Panc1 (cell line): ENCODE measurements at regions of chrX and their contacts with region 1.

Region 1: GRCh38 chrX:98654565-98654964 is 1755.5 kb downstream of the PCDH19 start:
- DNase-seq: no peak
- ATAC-seq: no peak
- H3K4me3 ChIP-seq: no peak overlapping the region
- H3K27ac ChIP-seq: no peak overlapping the region
- H3K4me1 ChIP-seq: no peaks in the 10 kb centered on the region
- H3K27me3 ChIP-seq: no peaks in the 10 kb centered on the region
- CTCF ChIP-seq: no peak

Region 2: DNA sequence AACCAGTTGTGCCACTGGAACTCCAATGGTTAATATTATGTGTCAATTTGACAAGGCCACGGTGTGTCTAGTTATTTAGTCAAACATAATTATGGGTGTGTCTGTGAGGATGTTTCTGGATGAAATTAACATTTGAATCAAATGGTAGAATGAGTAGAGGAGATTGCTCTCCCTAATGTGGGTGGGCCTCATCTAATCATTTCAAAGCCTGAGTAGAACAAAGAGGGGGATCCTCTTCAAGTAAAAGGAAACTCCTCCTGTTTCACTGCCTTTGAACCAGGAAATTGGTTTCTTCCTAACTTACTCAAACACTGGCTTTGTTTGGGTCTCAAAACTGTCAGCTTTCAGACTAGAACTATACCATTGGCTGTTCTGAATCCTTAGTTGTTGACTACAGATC is 63.4 kb after region 1 on chrX:
- CTCF ChIA-PET with region 1: no interaction called
- POLR2A ChIA-PET with region 1: no interaction called
- in situ Hi-C with region 1: no loop called
- intact Hi-C with region 1: no loop called
- DNase-seq: no peak
- ATAC-seq: no peak
- H3K4me3 ChIP-seq: no peak overlapping the region
- H3K27ac ChIP-seq: no peak overlapping the region
- H3K4me1 ChIP-seq: no peaks in the 10 kb centered on the region
- H3K27me3 ChIP-seq: no peaks in the 10 kb centered on the region
- CTCF ChIP-seq: no peak

Region 3: GRCh38 chrX:99001286-99001685 is 346.7 kb after region 1 on chrX:
- CTCF ChIA-PET with region 1: no interaction called
- POLR2A ChIA-PET with region 1: no interaction called
- in situ Hi-C with region 1: no loop called
- intact Hi-C with region 1: no loop called
- DNase-seq: no peak
- ATAC-seq: no peak
- H3K4me3 ChIP-seq: no peak overlapping the region
- H3K27ac ChIP-seq: no peak overlapping the region
- H3K4me1 ChIP-seq: no peaks in the 10 kb centered on the region
- H3K27me3 ChIP-seq: no peaks in the 10 kb centered on the region
- CTCF ChIP-seq: no peak

Region 4: DNA sequence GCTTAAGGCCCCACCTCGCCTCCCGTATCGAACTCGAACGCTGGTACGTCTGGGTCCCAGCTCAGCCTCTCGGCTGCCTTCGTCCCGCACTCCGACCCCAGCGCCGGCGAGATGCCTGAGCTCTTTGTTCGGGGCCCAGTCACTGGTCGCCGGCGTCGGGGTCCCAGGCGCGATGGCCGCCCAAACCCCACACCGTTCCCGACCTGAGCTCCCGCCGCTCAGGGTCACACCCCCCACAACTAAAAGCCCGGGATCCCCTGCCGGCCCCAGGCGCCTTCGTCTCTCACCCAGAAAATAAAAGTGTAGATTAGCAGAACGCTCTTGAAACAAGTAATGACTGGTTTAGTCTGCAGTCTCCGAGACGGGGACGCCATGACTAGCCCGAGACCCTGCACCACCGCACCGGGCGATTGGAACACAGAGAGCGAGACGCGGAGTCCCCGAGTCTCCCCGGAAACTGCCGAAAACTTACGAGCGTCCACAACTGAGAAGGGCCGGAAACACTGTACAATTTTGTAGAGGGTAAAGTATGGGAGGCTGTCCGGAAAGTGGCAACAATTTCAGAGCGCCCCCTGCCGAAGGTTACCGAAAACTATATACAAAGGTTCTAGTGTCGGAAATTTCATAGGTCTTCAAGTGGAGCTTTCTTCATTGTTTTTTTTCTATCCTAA is 1981.9 kb after region 1 on chrX and contains the start of gene TSPAN6:
- CTCF ChIA-PET with region 1: interaction called, 14 read pairs
- POLR2A ChIA-PET with region 1: no interaction called
- in situ Hi-C with region 1: no loop called
- intact Hi-C with region 1: no loop called
- DNase-seq: peak; percentile 73
- ATAC-seq: peak; percentile 100
- H3K4me3 ChIP-seq: peak within 1 kb of the TSS; percentile 64 to 77
- H3K27ac ChIP-seq: peak within 1 kb of the TSS; percentile 64
- H3K4me1 ChIP-seq: peaks cover 4% of the 10 kb centered on the region; the same call in 1 of the 2 replicates
- H3K27me3 ChIP-seq: no peaks in the 10 kb centered on the region
- CTCF ChIP-seq: peak; percentile 84
- total RNA-seq, gene TSPAN6: 7.2 TPM